ENCODE measurements at regions of chr3 and their contacts with region 1.

Region 1: DNA sequence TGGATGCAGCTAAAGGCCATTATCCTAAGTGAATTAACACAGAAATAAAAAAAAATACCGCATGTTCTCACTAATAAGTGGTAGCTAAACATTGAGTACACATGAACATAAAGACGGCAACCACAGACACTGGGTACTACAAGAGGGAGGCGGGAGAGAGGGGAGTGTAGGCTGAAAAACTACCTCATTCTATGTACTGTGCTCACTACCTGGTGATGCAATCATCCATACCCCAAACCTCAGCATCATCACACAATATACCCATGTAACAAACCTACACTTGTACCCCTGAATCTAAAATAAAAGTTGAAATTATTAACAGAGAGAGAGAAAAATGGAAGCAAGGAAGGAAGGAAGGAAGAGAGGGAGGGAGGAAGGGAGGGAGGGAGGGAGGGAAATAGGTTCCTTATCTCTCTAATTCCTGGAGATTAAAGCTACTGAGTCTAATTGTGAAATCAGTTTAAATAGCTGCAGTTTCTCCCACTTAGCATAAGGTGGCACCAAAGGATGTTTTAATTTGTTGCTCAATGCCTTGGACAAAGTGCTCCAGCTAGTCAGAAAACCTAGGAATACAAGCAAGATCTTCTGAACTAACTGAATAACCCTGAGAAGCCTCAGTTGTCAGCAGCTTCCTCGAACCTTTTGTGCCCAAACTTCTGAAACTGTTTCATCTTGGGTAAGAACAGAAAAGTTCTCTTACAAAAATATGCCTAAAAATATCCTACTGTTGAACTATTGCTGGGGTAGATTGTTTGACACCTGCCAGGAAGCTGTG is 79.4 kb upstream of the ATP11B start:
- DNase-seq: no peak
- H3K4me3 ChIP-seq: no peak overlapping the region
- H3K27ac ChIP-seq: no peak overlapping the region
- H3K4me1 ChIP-seq: no peaks in the 10 kb centered on the region
- H3K27me3 ChIP-seq: no peaks in the 10 kb centered on the region
- CTCF ChIP-seq: peak; percentile 32

Region 2: GRCh38 chr3:182837855-182838454 is 124.0 kb after region 1 on chr3:
- intact Hi-C with region 1: loop called (anchors 5 kb)
- DNase-seq: no peak
- H3K4me3 ChIP-seq: no peak overlapping the region
- H3K27ac ChIP-seq: no peak overlapping the region
- H3K4me1 ChIP-seq: no peaks in the 10 kb centered on the region
- H3K27me3 ChIP-seq: no peaks in the 10 kb centered on the region
- CTCF ChIP-seq: peak; percentile 27